ENCODE measurements at regions of chr20 and their contacts with region 1.

Region 1: DNA sequence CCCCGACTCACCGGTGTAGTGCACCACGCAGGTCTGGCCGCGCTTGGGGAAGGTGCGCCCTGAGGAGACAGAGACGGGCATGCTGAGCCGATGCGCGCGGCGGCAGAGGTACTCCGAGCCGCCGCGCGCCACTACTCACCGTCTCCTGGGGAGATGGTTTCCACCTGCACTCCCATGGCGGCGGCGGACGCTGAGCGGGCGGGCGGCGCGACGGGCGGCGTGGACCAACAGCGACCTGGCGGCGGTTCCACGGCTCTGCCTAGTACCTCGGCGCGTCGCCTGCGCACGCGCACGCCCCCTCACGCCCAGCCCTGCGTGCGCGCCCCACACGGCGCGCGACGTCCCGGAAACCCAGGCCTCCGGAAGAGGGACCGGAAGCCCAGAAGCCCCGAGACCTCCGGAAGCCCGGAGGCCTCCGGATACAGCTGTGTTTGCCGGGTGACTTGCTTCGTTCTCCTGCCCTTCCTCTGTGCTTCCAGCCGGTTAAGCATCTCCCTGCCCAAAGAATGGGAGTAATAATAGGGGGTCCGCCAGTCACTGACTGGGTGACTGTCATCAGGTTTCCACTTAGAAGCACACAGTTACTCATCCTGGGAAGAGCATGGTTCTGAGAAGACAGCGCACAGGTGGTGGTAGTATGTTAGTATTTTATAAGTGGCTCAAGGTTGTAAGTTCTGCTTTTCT is at the start of gene FKBP1A:
- DNase-seq: peak; percentile 90
- ATAC-seq: peak; percentile 85
- H3K4me3 Mint-ChIP-seq: peak within 1 kb of the TSS; percentile 98
- H3K27ac Mint-ChIP-seq: peak within 1 kb of the TSS; percentile 99
- H3K4me1 Mint-ChIP-seq: peaks cover 83% of the 10 kb centered on the region
- H3K27me3 Mint-ChIP-seq: no peaks in the 10 kb centered on the region
- CTCF ChIP-seq: no peak
- total RNA-seq, gene FKBP1A: 128 and 134 TPM in 2 replicates

Region 2: DNA sequence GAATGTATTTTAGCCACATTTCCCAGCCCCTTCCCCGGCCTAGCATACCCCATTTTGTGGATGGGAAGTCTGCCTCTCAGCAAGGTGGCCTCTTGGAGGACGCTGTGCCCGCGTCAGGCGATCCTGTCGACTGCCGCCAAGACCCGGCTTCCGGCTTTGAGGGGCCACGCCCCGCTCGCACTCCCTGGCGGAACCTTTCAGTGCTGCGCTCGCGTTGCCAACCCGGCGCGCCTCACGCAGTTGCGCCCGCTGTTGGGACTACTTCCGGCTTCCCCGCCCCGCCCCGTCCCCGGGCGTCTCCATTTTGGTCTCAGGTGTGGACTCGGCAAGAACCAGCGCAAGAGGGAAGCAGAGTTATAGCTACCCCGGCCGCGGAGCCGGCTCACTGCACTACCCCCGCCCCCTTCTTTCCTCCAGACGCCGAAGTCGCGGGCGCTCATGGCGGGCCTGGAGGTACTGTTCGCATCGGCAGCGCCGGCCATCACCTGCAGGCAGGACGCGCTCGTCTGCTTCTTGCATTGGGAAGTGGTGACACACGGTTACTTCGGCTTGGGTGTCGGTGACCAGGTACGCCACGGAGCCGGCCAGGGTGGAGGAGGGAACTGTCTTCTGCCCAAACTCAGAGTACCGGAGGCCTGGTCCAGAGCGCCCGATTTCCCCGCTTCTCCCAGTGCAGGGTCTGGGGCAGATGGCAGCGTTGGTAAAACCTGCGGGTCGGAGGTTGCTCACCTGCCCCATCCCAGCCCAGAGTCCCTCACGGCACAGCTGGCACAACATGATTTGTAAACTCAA is 274.4 kb before region 1 on chr20 and contains the start of gene PSMF1:
- CTCF ChIA-PET with region 1: no interaction called
- POLR2A ChIA-PET with region 1: no interaction called
- intact Hi-C with region 1: loop called (anchors 1 kb)
- DNase-seq: peak; percentile 98
- ATAC-seq: peak; percentile 94
- H3K4me3 Mint-ChIP-seq: peak within 1 kb of the TSS; percentile 93
- H3K27ac Mint-ChIP-seq: peak within 1 kb of the TSS; percentile 85
- H3K4me1 Mint-ChIP-seq: peaks cover 64% of the 10 kb centered on the region
- H3K27me3 Mint-ChIP-seq: no peaks in the 10 kb centered on the region
- CTCF ChIP-seq: no peak
- total RNA-seq, gene PSMF1: 130 and 137 TPM in 2 replicates

Region 3: GRCh38 chr20:1375515-1375914 is 17.4 kb before region 1 on chr20:
- CTCF ChIA-PET with region 1: no interaction called
- POLR2A ChIA-PET with region 1: interaction called, 13 read pairs
- intact Hi-C with region 1: loop called (anchors 1 kb)
- DNase-seq: no peak
- ATAC-seq: no peak
- H3K4me3 Mint-ChIP-seq: no peak overlapping the region
- H3K27ac Mint-ChIP-seq: peak overlapping the region; percentile 57
- H3K4me1 Mint-ChIP-seq: peaks cover 53% of the 10 kb centered on the region
- H3K27me3 Mint-ChIP-seq: no peaks in the 10 kb centered on the region
- CTCF ChIP-seq: no peak

Region 4: DNA sequence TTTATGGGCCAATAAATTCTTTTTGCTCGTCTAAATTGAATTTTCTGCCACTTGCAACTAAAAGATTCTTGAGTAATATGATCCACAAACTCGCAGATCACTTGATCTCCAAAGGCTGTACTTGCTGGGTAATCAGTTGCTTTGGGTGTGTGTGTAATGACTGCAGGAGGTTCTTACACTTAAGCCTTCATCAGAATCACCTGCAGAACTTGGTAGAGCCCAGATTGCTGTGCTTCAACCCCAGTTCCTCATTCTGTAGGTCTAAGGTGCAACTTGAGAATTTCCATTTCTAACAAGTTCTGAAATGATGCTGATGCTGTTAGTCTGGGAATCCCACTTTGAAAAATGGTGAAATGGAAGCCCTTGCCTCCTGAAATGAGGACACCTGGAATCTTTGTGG is 12.8 kb after region 1 on chr20:
- CTCF ChIA-PET with region 1: no interaction called
- POLR2A ChIA-PET with region 1: no interaction called
- intact Hi-C with region 1: no loop called
- DNase-seq: no peak
- ATAC-seq: no peak
- H3K4me3 Mint-ChIP-seq: no peak overlapping the region
- H3K27ac Mint-ChIP-seq: no peak overlapping the region
- H3K4me1 Mint-ChIP-seq: no peaks in the 10 kb centered on the region
- H3K27me3 Mint-ChIP-seq: peaks cover 4% of the 10 kb centered on the region
- CTCF ChIP-seq: no peak

Region 5: DNA sequence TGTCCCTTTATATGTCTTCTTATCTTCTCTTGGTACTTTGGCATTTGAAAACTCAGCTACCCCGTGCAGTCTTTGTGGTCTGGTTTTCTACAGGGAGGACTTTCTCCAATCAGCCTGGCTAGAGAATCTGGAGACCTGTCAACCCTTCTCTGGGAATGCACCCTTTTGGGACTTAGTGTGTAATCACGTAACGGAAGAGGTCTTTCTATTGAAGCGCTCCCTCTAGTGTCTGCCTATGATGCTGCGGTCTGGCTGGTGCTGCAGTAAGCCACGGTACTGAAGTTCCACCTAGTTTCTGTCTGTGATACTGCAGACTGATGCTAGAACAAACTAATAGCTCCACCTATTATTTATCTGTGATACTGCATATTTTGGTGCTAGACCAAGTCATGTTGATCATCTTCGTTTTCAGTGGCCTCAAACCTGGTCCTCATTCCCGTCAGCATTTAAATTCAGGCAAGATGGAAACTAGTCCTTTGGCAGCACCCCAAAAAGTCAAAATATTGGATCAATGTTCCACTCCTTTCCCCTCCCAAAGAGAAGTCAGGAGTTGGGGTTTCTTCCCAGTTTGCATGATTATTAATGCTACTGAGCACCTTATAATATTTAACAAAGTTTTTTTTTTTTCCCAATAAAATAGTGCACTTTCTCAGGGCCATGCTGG is 110.7 kb after region 1 on chr20:
- CTCF ChIA-PET with region 1: interaction called, 5 read pairs
- POLR2A ChIA-PET with region 1: no interaction called
- intact Hi-C with region 1: loop called (anchors 2 kb)
- DNase-seq: peak; percentile 45
- ATAC-seq: peak; percentile 100
- H3K4me3 Mint-ChIP-seq: no peak overlapping the region
- H3K27ac Mint-ChIP-seq: no peak overlapping the region
- H3K4me1 Mint-ChIP-seq: peaks cover 2% of the 10 kb centered on the region
- H3K27me3 Mint-ChIP-seq: peaks cover 23% of the 10 kb centered on the region
- CTCF ChIP-seq: peak; percentile 89

Region 6: GRCh38 chr20:1600736-1601135 is 207.8 kb after region 1 on chr20:
- CTCF ChIA-PET with region 1: no interaction called
- POLR2A ChIA-PET with region 1: no interaction called
- intact Hi-C with region 1: no loop called
- DNase-seq: no peak
- ATAC-seq: no peak
- H3K4me3 Mint-ChIP-seq: no peak overlapping the region
- H3K27ac Mint-ChIP-seq: no peak overlapping the region
- H3K4me1 Mint-ChIP-seq: no peaks in the 10 kb centered on the region
- H3K27me3 Mint-ChIP-seq: no peaks in the 10 kb centered on the region
- CTCF ChIP-seq: no peak

Measured in activated B cell treated with CpG ODN at 0.5 μM for 24 hours (primary cell).